Dendritic cell treated with granulocyte-macrophage colony-stimulating factor and Interleukin-4, amounts not matched to agents 40 ng/mL and 50 ng/mL, for 4 days (primary cell): ENCODE measurements at regions of chr2 and their contacts with region 1.

Region 1: DNA sequence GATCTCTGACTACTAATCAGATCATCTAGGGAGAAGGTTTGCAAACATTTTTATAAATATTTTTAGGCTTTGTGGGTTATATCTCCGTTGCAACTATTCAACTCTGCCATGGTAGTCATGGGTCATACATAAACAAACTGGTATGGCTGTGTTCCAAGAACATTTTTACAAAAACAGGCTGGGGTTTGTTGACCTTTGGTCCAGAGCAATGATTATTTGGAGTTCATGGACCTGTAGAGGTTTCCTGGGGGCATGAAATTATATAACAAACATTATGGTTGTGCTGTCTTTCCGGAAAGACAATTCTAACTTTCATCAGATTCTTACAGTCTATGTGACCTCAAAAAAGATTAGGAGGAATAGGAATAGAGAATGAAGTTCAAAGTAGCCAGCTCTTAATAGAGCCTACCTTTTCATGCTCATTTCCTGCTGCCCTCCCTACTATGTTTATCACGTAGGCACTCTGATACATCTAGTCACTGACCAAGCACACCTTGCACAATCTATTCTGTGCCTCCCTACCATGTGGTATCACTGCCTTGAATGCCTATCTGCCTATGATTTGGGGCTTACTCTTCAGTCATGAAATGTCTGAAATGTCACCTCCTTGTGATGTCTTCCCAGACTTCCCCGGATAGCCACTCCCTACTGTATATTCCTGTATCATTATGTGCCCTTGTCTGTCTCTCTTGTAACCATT is 102.4 kb upstream of the SCN1A start:
- H3K4me3 Mint-ChIP-seq: no peak overlapping the region
- H3K27ac Mint-ChIP-seq: no peak overlapping the region
- H3K4me1 Mint-ChIP-seq: no peaks in the 10 kb centered on the region
- H3K27me3 Mint-ChIP-seq: no peaks in the 10 kb centered on the region

Region 2: DNA sequence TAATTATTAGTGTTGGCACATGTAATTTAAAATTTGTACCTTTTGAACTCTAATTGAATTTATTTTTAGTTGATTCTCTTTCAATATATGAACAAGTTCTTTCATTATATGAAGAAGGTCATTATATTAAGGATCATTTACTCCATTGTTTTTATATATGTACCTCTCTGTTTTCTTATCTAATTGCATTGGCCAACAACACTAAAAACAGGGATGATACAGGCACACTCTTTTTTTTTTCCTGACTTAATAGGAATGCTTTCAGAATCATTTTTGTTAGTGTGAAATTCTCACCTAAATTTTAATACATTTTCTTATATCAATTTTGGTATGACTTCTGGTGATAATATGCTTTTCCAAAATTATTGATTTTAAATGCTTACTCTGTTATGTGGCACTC is 27.4 kb before region 1 on chr2:
- intact Hi-C with region 1: loop called (anchors 1 kb)
- H3K4me3 Mint-ChIP-seq: no peak overlapping the region
- H3K27ac Mint-ChIP-seq: no peak overlapping the region
- H3K4me1 Mint-ChIP-seq: no peaks in the 10 kb centered on the region
- H3K27me3 Mint-ChIP-seq: no peaks in the 10 kb centered on the region